Posterior vena cava (tissue), 2 donors: ENCODE measurements at regions of chr18 and their contacts with region 1.

Region 1: DNA sequence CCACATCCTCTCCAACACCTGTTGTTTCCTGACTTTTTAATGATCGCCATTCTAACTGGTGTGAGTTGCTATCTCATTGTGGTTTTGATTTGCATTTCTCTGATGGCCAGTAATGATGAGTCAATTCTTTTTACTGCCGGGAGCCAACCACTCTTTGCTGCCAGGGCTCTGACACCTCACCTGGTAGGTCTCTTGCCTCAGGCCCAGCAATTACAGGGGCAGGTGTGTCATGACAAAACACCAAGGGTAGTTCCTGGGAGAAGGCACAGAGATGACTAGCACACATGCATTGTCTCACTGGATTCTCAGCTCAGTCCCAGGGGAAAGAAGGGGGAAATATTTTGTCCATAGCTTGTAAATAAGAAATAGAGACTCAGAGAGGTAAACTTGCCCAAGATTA is 122.3 kb downstream of the CHST9 start:
- DNase-seq: no peak

Region 2: GRCh38 chr18:26919627-26920026 is 143.2 kb before region 1 on chr18:
- intact Hi-C with region 1: loop called in 1 of 2 experiments (anchors 10 kb)
- DNase-seq: no peak